Common myeloid progenitor, CD34-positive (primary cell): ENCODE measurements at regions of chr11 and their contacts with region 1.

Region 1: DNA sequence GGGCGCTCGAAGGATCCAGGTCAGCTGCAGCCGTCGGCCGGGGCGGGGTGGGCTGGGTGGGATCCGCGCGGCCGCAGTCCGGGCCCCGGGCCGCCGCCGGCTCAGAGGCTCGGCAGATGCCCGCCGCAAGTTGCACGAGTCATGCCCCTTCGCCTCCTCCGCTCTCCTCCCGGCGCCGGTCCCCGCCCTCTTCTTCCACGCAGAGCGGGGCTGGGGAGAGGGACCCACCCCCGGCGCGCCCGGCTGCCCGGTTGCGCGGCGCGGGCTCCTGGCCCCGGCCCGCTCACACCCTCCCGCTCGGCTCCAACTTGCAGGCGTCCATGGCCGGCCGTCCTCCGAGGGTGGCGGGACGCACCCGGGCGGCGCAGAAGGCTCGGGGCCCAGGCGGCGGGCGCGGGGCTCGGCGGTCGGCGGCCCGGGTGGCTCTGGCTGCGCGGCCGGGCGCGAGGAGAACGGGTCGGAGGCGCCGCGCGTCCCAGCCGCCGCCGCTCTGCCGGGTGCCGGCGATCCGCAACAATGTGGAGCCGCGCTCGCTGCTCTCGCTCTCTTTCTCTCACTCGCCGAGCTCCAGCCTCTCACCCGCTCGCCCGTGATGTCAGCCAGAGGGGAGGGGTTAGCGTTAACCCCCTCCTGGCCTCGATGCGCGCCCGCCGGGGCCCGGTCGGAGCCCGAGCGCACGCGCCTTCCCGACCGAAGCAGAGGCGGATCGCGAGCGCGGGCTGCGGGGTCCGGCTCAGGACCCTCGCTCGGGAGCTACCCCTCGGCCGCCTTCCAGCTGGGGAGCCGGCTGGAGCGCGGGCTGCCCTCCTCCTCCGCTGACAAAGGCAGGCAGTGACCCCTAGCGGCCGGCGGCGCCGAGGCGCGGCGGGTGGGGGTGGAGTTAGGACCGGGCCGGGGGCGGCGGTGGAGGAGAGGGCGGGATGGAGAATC is at the start of gene NECTIN1:
- DNase-seq: peak; percentile 78 to 91 (median 87)
- H3K4me3 ChIP-seq: peak within 1 kb of the TSS; percentile 59 to 76 (median 66)
- H3K27ac ChIP-seq: no peak within 1 kb of the TSS
- H3K4me1 ChIP-seq: peaks cover 3 to 39% (median 30%) of the 10 kb centered on the region in 4 experiments
- H3K27me3 ChIP-seq: peaks cover 0 to 41% (median 14%) of the 10 kb centered on the region in 5 experiments

Region 2: GRCh38 chr11:119673759-119674336 is 55.1 kb before region 1 on chr11:
- CTCF ChIA-PET with region 1: interaction called, 59 read pairs
- POLR2A ChIA-PET with region 1: interaction called, 4 read pairs
- DNase-seq: peak; percentile 48 to 86 (median 82)
- H3K4me3 ChIP-seq: peak overlapping the region in 1 of 7 experiments; percentile 23
- H3K27ac ChIP-seq: no peak overlapping the region
- H3K4me1 ChIP-seq: peaks cover 0 to 25% (median 20%) of the 10 kb centered on the region in 4 experiments
- H3K27me3 ChIP-seq: peaks cover 0 to 3% (median 0%) of the 10 kb centered on the region in 5 experiments

Region 3: DNA sequence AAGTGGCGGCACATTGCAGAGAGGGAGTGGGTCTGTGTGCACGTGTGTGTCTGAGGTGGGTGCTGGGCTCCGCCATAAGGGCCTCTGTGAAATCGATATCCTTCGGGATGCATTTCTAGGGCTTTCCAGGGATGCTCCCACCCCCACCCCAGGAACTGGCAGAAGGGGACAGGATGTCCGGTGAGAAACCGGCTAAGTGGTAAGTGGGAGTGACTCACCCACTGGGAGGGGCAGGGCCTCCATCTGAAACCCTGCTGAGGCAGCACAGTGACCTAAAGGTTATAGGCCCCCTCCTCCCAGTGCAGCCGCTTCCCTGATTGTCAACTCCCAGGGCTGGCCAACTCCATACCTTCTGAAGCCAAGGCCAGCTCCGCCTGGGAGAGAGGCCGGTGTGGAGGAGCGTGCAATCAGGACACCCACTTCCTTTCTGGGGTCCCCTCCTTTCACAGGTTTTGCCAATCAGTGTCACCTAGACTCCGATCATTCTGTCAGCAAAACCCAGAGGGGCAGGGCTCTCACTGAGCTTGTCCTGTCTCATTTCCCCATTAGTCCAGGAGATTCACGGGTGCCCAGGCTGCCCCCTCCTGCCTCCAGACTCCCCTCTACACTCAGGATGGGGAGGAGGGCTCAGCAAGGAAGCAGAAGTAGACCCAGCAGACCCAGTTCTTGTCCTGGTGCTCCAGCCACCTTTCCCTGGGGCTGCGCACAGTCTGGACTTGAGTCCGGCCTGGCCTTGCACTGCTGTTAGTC is 44.4 kb before region 1 on chr11:
- CTCF ChIA-PET with region 1: interaction called, 31 read pairs
- POLR2A ChIA-PET with region 1: no interaction called
- DNase-seq: peak in 2 of 3 donors; percentile 35 to 51
- H3K4me3 ChIP-seq: peak overlapping the region in 1 of 7 experiments; percentile 3
- H3K27ac ChIP-seq: no peak overlapping the region
- H3K4me1 ChIP-seq: peaks cover 0 to 36% (median 19%) of the 10 kb centered on the region in 4 experiments
- H3K27me3 ChIP-seq: no peaks in the 10 kb centered on the region

Region 4: DNA sequence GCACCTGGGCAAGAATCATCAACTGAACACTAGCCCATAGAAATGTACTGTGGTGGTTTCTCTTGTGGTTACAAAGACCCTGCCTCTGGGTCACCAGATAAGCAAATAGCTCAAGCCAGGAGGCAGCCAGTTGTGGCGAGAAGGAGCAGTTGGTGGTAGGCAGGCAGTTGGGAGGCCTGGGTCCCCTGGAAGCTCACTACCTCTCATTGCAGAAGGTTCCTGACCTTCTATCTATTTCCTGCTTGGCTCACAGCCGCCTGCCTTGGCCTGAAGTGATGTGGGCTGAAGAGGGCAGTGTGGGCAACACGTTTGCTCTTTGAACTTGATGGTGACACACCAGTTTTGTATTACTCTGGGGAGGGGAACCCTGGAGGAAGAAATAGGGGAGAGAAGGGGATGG is 34.6 kb before region 1 on chr11:
- CTCF ChIA-PET with region 1: interaction called, 14 read pairs
- POLR2A ChIA-PET with region 1: no interaction called
- DNase-seq: peak; percentile 63 to 94 (median 90)
- H3K4me3 ChIP-seq: no peak overlapping the region
- H3K27ac ChIP-seq: no peak overlapping the region
- H3K4me1 ChIP-seq: peaks cover 2 to 58% (median 33%) of the 10 kb centered on the region in 4 experiments
- H3K27me3 ChIP-seq: peaks cover 0 to 5% (median 0%) of the 10 kb centered on the region in 5 experiments

Region 5: DNA sequence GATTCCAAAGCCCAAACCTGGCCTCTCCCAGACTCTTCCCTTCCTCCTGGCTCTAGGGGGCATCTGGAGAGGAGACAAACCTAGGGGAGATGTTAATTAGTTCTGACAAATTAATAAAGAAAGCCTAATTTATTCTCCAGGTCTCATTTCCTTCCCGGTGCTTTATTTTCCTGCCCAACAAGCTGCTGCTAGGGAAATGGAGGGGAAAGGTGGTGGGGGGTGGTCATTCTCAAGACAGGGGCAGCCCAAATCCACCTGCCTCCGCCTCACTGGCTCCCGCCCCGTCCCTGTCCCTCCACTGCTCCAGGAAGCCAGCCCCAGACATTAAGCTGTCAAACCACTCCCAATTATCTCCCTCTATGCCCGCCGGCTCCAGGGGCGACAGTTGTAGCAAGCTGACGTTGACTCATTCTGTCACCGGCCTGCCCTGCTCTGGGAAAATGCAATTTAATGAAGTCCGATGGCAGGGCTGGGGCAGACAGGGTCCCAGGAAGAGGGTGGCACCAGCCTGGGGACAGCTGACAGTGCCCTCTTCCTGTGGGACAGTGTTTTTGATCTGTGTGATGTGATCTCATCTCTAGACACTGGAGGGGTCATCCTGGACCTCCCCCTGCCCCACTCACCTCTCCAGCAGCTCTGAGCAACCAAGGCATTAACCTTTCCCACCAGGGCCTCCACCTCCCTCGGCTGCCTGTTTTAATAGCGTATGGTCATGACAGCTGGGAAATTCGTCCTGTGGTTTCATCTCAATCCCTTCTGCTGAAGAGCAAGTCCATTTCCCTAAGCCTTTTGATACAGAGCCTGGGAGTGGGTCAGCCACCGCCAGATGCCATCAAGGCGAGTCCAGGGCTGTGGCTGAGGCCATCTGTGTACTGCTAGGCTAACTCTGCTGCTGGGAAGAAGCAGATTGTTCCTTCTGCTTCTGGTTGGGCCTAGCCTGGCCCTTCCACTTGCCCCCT is 27.0 kb before region 1 on chr11:
- CTCF ChIA-PET with region 1: interaction called, 19 read pairs
- POLR2A ChIA-PET with region 1: no interaction called
- DNase-seq: no peak
- H3K4me3 ChIP-seq: no peak overlapping the region
- H3K27ac ChIP-seq: no peak overlapping the region
- H3K4me1 ChIP-seq: no peaks in the 10 kb centered on the region
- H3K27me3 ChIP-seq: no peaks in the 10 kb centered on the region

Region 6: DNA sequence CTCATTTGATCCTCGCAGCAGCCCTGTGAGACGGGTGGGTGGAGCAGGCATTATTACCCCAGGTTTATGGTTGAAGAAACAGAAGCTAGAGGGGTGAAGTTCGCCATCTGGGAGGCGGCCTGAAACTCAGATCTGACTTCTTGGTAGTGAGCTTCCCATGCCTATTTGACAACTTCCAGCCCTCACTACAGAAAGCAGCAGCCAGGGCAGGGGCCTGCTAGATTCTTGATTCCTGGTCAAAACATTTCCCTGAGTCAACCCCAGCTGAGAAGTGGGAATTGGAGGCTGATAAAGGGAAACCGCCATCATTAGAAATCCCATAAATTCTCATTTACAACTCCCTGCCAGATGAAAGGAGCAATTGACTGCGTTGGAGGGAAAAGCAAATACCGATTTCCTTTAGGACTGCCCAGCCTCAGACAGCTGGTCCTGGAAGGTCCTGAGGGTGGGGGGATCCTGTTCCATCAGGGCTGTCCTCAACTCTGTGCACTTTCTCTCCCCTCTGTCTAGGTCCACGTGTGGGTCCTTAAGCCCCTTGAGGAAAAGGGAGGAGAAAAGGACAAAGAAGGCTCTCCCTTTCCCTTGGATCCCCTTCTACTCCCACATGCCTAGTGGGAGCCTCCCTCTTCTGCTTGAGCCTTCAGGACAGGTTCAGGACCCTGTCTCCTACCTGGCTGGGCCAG is 10.2 kb after region 1 on chr11:
- CTCF ChIA-PET with region 1: interaction called, 13 read pairs
- POLR2A ChIA-PET with region 1: interaction called, 4 read pairs
- DNase-seq: no peak
- H3K4me3 ChIP-seq: no peak overlapping the region
- H3K27ac ChIP-seq: no peak overlapping the region
- H3K4me1 ChIP-seq: peaks cover 0 to 18% (median 8%) of the 10 kb centered on the region in 4 experiments
- H3K27me3 ChIP-seq: peaks cover 0 to 30% (median 25%) of the 10 kb centered on the region in 5 experiments

Region 7: GRCh38 chr11:119772641-119773415 is 43.9 kb after region 1 on chr11:
- CTCF ChIA-PET with region 1: no interaction called
- POLR2A ChIA-PET with region 1: no interaction called
- DNase-seq: no peak
- H3K4me3 ChIP-seq: no peak overlapping the region
- H3K27ac ChIP-seq: no peak overlapping the region
- H3K4me1 ChIP-seq: no peaks in the 10 kb centered on the region
- H3K27me3 ChIP-seq: peaks cover 0 to 36% (median 6%) of the 10 kb centered on the region in 5 experiments